ENCODE measurements at regions of chr14 and their contacts with region 1.

Region 1: GRCh38 chr14:68248481-68249255 is 429.1 kb downstream of the RAD51B start:
- DNase-seq: peak in 5 of 14 experiments; percentile 1 to 79 (median 69)
- ATAC-seq: peak; percentile 83
- H3K4me3 ChIP-seq: no peak overlapping the region
- H3K4me3 Mint-ChIP-seq: no peak overlapping the region
- H3K27ac ChIP-seq: no peak overlapping the region
- H3K27ac Mint-ChIP-seq: peak overlapping the region; percentile 67
- H3K4me1 ChIP-seq: peaks cover 6% of the 10 kb centered on the region
- H3K4me1 Mint-ChIP-seq: peaks cover 52% of the 10 kb centered on the region
- H3K27me3 ChIP-seq: no peaks in the 10 kb centered on the region
- H3K27me3 Mint-ChIP-seq: no peaks in the 10 kb centered on the region
- CTCF ChIP-seq: peak; percentile 77

Region 2: DNA sequence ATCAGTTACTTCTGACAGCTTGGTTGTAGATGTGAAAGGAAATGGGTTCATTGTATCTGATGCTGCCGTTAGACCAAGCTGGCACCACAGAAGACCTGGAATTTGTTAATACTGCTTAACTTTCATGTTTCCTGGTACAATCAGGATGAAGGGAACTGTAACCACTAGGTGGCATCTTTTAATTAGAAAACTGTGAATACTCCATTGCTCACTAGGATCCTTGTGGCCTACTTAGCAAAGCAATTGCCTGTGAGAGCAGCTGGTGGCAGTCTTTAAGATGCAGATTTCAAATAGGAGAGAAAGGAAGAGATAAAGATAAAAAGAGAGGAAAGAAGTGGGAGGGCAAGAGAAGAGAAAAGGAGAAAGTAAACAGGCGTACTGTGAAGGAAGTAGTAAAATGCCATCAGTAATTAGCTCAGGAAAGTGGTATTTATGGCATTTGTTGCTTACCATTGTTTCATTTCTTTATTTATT is 314.6 kb before region 1 on chr14:
- CTCF ChIA-PET with region 1: interaction called, 4 read pairs
- POLR2A ChIA-PET with region 1: no interaction called
- intact Hi-C with region 1: loop called in 1 of 2 experiments (anchors 5 kb)
- DNase-seq: peak in 4 of 14 experiments; percentile 29 to 69 (median 66)
- ATAC-seq: peak; percentile 67
- H3K4me3 ChIP-seq: no peak overlapping the region
- H3K4me3 Mint-ChIP-seq: no peak overlapping the region
- H3K27ac ChIP-seq: no peak overlapping the region
- H3K27ac Mint-ChIP-seq: peak overlapping the region; percentile 17
- H3K4me1 ChIP-seq: no peaks in the 10 kb centered on the region
- H3K4me1 Mint-ChIP-seq: peaks cover 6% of the 10 kb centered on the region
- H3K27me3 ChIP-seq: no peaks in the 10 kb centered on the region
- H3K27me3 Mint-ChIP-seq: no peaks in the 10 kb centered on the region
- CTCF ChIP-seq: peak; percentile 76

Region 3: DNA sequence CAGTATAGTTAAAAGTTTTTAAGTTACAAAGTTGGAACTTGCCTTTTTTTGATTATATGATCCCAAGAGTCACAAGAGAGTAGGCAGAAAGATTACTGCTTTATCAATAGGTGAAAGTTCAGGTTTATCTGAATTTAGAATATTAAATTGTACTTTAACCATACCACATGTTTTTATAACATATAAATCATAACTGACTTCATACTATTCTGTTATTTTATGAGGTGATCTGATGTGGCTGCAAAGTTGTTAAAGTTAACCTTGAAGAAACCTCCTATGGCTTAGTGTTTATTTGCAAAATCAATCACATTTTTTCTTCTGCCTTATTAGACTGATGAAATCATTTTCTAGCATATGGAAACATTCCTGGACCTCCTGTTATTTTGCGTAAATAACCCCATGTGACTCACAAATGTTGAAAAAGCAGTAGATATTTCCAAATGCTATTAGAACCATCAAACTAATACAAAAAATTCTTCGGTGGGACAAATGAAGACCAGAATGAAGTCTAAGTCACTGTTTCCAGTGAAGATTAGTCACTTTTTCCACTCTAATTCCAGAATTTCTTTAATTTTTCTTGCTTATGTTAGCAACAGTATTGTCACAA is 297.0 kb before region 1 on chr14:
- CTCF ChIA-PET with region 1: no interaction called
- POLR2A ChIA-PET with region 1: no interaction called
- intact Hi-C with region 1: no loop called
- DNase-seq: no peak
- ATAC-seq: no peak
- H3K4me3 ChIP-seq: no peak overlapping the region
- H3K4me3 Mint-ChIP-seq: no peak overlapping the region
- H3K27ac ChIP-seq: no peak overlapping the region
- H3K27ac Mint-ChIP-seq: no peak overlapping the region
- H3K4me1 ChIP-seq: no peaks in the 10 kb centered on the region
- H3K4me1 Mint-ChIP-seq: no peaks in the 10 kb centered on the region
- H3K27me3 ChIP-seq: no peaks in the 10 kb centered on the region
- H3K27me3 Mint-ChIP-seq: no peaks in the 10 kb centered on the region
- CTCF ChIP-seq: no peak

Region 4: DNA sequence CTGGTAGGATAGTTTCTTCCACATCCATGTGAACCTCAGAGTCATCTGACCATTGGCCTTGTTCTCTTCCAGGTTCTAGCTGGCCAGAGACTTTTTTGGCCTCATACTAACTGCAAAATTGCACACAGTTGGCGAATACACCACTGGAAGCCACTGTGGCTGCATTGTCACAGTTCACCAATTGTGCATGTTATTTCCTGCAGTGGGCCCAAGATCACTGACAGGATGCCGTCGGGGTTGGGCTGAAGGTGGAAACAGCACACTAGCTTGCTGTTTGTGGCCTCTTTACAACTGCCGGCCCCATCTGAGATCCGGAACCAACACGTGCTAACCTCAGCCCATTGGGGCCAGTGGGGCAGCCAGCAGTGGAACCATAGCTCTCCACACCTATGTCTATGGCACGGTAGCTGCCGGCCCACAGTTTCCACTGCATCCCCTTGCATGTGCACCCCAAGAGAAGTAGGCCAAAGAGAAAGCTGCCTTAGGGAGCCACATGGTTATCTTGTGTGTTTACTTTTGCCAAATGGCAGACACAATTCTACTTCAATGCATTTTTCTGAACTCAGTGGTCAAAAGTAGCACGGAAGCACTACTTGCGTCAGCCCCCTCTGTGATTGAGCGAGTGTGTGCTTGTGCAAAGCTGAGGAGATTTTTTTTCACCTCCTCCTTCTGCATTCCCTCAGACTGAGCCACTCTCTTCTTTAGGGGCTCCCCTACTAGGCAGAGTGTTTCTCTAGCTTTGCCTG is 34.9 kb after region 1 on chr14:
- CTCF ChIA-PET with region 1: interaction called, 6 read pairs
- POLR2A ChIA-PET with region 1: interaction called, 16 read pairs
- intact Hi-C with region 1: loop called in 1 of 2 experiments (anchors 5 kb)
- DNase-seq: peak; percentile 47 to 86 (median 66)
- ATAC-seq: peak; percentile 73
- H3K4me3 ChIP-seq: no peak overlapping the region
- H3K4me3 Mint-ChIP-seq: peak overlapping the region; percentile 56
- H3K27ac ChIP-seq: peak overlapping the region; percentile 76 to 88
- H3K27ac Mint-ChIP-seq: peak overlapping the region; percentile 99
- H3K4me1 ChIP-seq: peaks cover 62% of the 10 kb centered on the region
- H3K4me1 Mint-ChIP-seq: peaks cover 94% of the 10 kb centered on the region
- H3K27me3 ChIP-seq: no peaks in the 10 kb centered on the region
- H3K27me3 Mint-ChIP-seq: no peaks in the 10 kb centered on the region
- CTCF ChIP-seq: peak; percentile 23

Region 5: GRCh38 chr14:68373847-68374444 is 125.3 kb after region 1 on chr14:
- CTCF ChIA-PET with region 1: no interaction called
- POLR2A ChIA-PET with region 1: no interaction called
- intact Hi-C with region 1: no loop called
- DNase-seq: no peak
- ATAC-seq: no peak
- H3K4me3 ChIP-seq: no peak overlapping the region
- H3K4me3 Mint-ChIP-seq: no peak overlapping the region
- H3K27ac ChIP-seq: no peak overlapping the region
- H3K27ac Mint-ChIP-seq: peak overlapping the region; percentile 10
- H3K4me1 ChIP-seq: peaks cover 27% of the 10 kb centered on the region
- H3K4me1 Mint-ChIP-seq: peaks cover 85% of the 10 kb centered on the region
- H3K27me3 ChIP-seq: no peaks in the 10 kb centered on the region
- H3K27me3 Mint-ChIP-seq: no peaks in the 10 kb centered on the region
- CTCF ChIP-seq: no peak

Region 6: DNA sequence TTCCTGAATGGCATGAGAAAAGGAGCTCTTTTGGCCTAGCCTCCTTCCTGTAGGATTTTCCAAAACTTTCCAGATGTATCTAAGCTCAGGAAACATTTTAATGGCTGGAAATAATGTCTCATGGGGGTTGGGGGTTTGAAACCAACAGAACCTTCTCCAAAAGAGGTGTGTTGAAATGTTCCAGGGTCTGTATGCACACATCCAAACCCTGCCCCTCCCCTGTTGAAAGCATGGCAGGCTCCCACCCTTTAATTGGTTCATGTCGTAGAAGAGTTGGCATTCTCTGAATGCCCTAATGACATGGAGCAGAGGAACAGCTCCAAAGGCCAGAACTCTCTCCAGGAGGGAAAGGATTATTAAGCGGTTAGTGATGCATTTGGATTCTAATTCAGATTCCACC is 191.0 kb after region 1 on chr14:
- CTCF ChIA-PET with region 1: no interaction called
- POLR2A ChIA-PET with region 1: no interaction called
- intact Hi-C with region 1: loop called in 1 of 2 experiments (anchors 1 kb)
- DNase-seq: no peak
- ATAC-seq: no peak
- H3K4me3 ChIP-seq: no peak overlapping the region
- H3K4me3 Mint-ChIP-seq: no peak overlapping the region
- H3K27ac ChIP-seq: no peak overlapping the region
- H3K27ac Mint-ChIP-seq: no peak overlapping the region
- H3K4me1 ChIP-seq: no peaks in the 10 kb centered on the region
- H3K4me1 Mint-ChIP-seq: peaks cover 3% of the 10 kb centered on the region
- H3K27me3 ChIP-seq: no peaks in the 10 kb centered on the region
- H3K27me3 Mint-ChIP-seq: no peaks in the 10 kb centered on the region
- CTCF ChIP-seq: no peak

Region 7: DNA sequence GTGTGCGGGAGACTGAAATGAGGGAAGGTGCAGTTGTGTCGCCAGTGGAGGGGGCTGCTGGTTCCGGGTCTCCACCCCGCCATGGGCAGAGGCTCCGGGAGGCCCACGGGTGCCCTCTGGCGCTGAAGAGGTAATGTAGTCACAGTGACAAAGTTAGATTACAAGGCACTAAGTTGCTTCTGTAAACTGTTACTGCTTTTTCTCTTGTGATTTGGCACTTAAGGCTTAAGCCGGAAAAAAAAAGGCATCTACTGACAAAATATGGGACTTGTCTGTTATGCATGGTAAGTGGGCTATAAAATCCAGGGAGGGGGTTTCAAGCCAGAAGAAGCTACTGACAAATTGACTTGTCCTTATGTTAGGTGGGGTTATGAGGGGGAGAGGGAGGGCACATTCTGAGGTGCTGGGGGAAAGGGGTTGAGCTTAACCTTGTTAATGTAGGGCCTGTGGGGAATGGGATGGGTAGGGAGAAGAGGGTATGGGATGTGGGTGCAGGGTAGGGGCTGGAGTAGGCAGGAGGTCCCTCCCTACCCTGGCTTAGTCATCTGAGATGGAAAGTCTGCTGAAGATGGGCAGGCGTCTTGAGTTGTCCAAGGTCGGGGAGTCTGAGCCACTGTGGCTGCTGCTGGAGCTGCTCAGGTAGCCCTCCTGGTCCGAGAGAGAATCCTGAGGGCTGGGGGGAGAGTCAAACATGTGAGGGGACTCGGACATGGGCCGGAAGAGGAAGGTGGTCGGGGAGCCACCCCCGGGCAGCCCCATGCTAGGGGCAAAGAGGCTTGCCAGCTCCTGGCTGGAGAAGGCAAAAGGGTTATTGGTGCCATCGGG is 540.5 kb after region 1 on chr14:
- CTCF ChIA-PET with region 1: interaction called, 21 read pairs
- POLR2A ChIA-PET with region 1: interaction called, 157 read pairs
- intact Hi-C with region 1: loop called (anchors 1 kb)
- DNase-seq: peak; percentile 81 to 94 (median 88)
- ATAC-seq: peak; percentile 44
- H3K4me3 ChIP-seq: peak overlapping the region; percentile 98
- H3K4me3 Mint-ChIP-seq: peak overlapping the region; percentile 92
- H3K27ac ChIP-seq: peak overlapping the region; percentile 67 to 100
- H3K27ac Mint-ChIP-seq: peak overlapping the region; percentile 99
- H3K4me1 ChIP-seq: peaks cover 58% of the 10 kb centered on the region
- H3K4me1 Mint-ChIP-seq: peaks cover 63% of the 10 kb centered on the region
- H3K27me3 ChIP-seq: no peaks in the 10 kb centered on the region
- H3K27me3 Mint-ChIP-seq: no peaks in the 10 kb centered on the region
- CTCF ChIP-seq: peak; percentile 82

Region 8: GRCh38 chr14:68843471-68844209 is 595.0 kb after region 1 on chr14:
- CTCF ChIA-PET with region 1: interaction called, 21 read pairs
- POLR2A ChIA-PET with region 1: interaction called, 3 read pairs
- intact Hi-C with region 1: loop called (anchors 1 kb)
- DNase-seq: peak; percentile 56 to 86 (median 73)
- ATAC-seq: peak; percentile 85
- H3K4me3 ChIP-seq: no peak overlapping the region
- H3K4me3 Mint-ChIP-seq: peak overlapping the region; percentile 28
- H3K27ac ChIP-seq: no peak overlapping the region
- H3K27ac Mint-ChIP-seq: no peak overlapping the region
- H3K4me1 ChIP-seq: peaks cover 17% of the 10 kb centered on the region
- H3K4me1 Mint-ChIP-seq: peaks cover 23% of the 10 kb centered on the region
- H3K27me3 ChIP-seq: no peaks in the 10 kb centered on the region
- H3K27me3 Mint-ChIP-seq: no peaks in the 10 kb centered on the region
- CTCF ChIP-seq: peak; percentile 94

Measured in CD4-positive, alpha-beta T cell (primary cell).